ENCODE measurements at regions of chr16 and their contacts with region 1.

Region 1: DNA sequence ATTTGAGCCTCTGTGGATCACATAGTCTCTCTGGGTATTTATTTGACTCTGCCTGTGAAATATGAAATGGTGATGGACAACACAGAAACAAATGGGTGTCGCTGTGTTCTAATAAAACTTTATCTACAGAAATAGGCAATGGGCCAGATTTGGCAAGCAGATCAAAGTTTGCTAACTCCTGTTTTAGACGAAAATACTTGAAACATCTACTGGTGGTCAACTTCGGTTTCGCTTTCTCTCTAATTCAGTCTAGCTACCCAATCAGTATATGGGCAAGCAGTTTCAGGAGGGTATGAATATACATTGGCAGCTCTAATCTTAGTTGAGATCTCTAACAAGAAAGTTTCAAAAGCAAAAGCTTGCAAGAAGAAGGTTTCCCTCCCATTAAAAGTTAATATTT is 60.1 kb upstream of the DYNLRB2 start:
- DNase-seq: no peak
- ATAC-seq: no peak
- H3K4me3 Mint-ChIP-seq: no peak overlapping the region
- H3K27ac Mint-ChIP-seq: no peak overlapping the region
- H3K4me1 Mint-ChIP-seq: no peaks in the 10 kb centered on the region
- H3K27me3 Mint-ChIP-seq: peaks cover 12% of the 10 kb centered on the region

Region 2: DNA sequence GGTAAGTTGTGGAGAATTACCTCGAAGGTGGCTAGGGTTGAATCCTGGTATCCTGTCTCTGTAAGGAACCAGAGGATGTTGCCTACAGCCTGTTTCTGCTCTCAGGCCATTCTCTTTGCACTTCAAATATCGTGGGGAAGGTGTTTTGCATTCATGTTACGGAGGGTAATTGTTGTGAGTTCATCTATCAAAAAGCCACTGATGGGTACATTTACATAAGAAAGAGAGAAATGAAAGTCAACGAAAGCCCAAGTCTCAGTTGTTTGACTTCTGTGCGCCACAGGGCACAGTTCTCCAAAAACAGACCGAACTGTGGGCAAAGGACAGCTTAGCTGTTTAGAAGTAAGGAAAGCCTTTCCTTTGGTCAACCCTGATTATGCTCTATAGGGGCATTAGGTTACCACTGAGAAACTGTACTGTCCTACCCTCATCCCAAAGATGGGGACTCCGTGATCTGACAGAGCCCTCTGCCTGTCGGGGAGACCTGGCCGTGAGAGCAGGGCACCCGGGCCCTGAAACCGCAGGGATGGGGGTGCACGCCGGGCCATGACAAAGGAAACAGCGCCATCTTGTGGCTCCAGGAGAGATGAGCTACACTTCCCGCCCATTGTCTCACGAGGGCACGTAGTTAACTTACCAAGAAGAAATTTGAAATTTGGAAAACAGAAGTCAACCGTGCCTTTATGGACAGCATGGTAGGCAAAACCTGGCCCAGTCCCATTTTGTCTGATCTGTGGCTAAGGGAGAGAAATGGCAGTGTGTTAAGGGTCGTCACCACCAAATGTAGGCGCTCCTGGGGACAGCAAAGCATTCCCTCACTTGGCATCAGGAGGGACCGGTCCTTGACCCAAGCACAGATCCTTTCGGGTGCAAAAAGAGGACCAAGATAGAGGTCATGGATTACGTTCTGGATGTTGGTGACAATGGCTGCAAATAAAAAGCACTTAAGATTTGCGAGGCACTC is 14.4 kb before region 1 on chr16:
- CTCF ChIA-PET with region 1: interaction called, 12 read pairs
- POLR2A ChIA-PET with region 1: no interaction called
- DNase-seq: peak; percentile 63
- ATAC-seq: peak; percentile 76
- H3K4me3 Mint-ChIP-seq: no peak overlapping the region
- H3K27ac Mint-ChIP-seq: no peak overlapping the region
- H3K4me1 Mint-ChIP-seq: no peaks in the 10 kb centered on the region
- H3K27me3 Mint-ChIP-seq: no peaks in the 10 kb centered on the region